ENCODE measurements at regions of chr6 and their contacts with region 1.

Region 1: DNA sequence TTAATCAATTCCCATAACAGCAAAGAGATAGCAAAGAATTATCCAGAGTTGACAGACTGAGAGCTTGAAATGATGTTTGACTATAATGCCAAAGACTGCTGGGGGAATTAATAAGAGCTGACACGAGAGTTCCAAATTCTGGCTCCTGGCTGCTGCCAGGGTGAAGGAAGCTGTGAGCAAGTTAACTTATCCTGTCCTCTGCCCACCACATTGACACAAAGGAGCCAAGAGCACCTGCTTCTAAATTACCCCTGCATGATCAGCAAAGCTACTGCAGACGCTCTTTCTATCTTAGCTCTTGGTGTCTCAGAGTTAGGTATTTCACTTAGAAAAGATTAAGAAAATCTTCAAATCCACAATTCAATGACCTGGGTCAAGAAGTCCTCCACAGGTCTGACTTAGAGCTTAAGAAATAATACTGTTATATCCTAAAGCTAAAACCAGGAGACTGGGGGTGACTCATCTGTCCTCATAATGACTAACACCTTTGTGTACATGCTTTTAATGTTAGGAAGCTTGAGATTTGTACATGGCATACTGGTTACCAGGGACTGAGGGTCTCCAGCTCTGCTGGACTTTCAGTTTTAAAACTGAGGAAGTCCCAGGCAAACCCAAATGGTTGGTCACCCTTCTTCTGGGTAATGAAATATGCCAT is 13.2 kb upstream of the FRK start:
- DNase-seq: peak; percentile 85
- ATAC-seq: peak; percentile 73
- H3K4me3 ChIP-seq: no peak overlapping the region
- H3K27ac ChIP-seq: peak overlapping the region; percentile 39
- H3K4me1 ChIP-seq: peaks cover 45% of the 10 kb centered on the region
- H3K27me3 ChIP-seq: no peaks in the 10 kb centered on the region
- CTCF ChIP-seq: no peak

Region 2: GRCh38 chr6:115271434-115271833 is 802.5 kb before region 1 on chr6:
- CTCF ChIA-PET with region 1: no interaction called
- POLR2A ChIA-PET with region 1: no interaction called
- intact Hi-C with region 1: no loop called
- DNase-seq: no peak
- ATAC-seq: no peak
- H3K4me3 ChIP-seq: no peak overlapping the region
- H3K27ac ChIP-seq: no peak overlapping the region
- H3K4me1 ChIP-seq: no peaks in the 10 kb centered on the region
- H3K27me3 ChIP-seq: no peaks in the 10 kb centered on the region
- CTCF ChIP-seq: no peak

Region 3: GRCh38 chr6:116027801-116028200 is 46.1 kb before region 1 on chr6:
- CTCF ChIA-PET with region 1: no interaction called
- POLR2A ChIA-PET with region 1: no interaction called
- intact Hi-C with region 1: loop called (anchors 5 kb)
- DNase-seq: peak; percentile 22
- ATAC-seq: peak; percentile 47
- H3K4me3 ChIP-seq: no peak overlapping the region
- H3K27ac ChIP-seq: no peak overlapping the region
- H3K4me1 ChIP-seq: peaks cover 29% of the 10 kb centered on the region
- H3K27me3 ChIP-seq: no peaks in the 10 kb centered on the region
- CTCF ChIP-seq: no peak

Region 4: GRCh38 chr6:116405138-116405537 is 331.2 kb after region 1 on chr6:
- CTCF ChIA-PET with region 1: no interaction called
- POLR2A ChIA-PET with region 1: no interaction called
- intact Hi-C with region 1: no loop called
- DNase-seq: no peak
- ATAC-seq: no peak
- H3K4me3 ChIP-seq: no peak overlapping the region
- H3K27ac ChIP-seq: no peak overlapping the region
- H3K4me1 ChIP-seq: peaks cover 13% of the 10 kb centered on the region
- H3K27me3 ChIP-seq: no peaks in the 10 kb centered on the region
- CTCF ChIP-seq: no peak

Measured in PC-3 (cell line).